ENCODE measurements at regions of chrX and their contacts with region 1.

Region 1: GRCh38 chrX:30992381-30992904 is 79.4 kb downstream of the FTHL17 start:
- DNase-seq: no peak
- ATAC-seq: no peak
- H3K4me3 ChIP-seq: no peak overlapping the region
- H3K4me3 Mint-ChIP-seq: no peak overlapping the region
- H3K27ac ChIP-seq: no peak overlapping the region
- H3K27ac Mint-ChIP-seq: no peak overlapping the region
- H3K4me1 ChIP-seq: no peaks in the 10 kb centered on the region
- H3K4me1 Mint-ChIP-seq: no peaks in the 10 kb centered on the region
- H3K27me3 ChIP-seq: no peaks in the 10 kb centered on the region
- H3K27me3 Mint-ChIP-seq: no peaks in the 10 kb centered on the region
- CTCF ChIP-seq: no peak

Region 2: DNA sequence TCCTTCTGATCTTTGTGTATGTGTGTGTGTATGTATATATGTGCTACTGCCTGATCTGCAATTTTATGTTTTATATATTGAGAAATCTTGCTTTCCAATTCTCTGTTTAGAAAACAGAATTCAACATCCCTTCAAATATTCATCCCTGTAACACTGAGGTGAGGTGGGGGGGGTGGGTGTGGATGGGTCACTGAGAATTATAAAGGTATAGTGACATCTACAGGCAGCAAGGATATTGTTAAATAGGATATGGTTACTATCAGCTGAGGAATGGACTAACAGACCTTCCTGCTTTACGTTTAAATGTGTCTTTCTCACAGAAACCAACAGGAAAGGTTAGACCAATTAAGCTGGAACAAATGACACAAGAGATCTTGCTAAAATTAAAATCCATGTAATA is 796.1 kb before region 1 on chrX:
- CTCF ChIA-PET with region 1: no interaction called
- POLR2A ChIA-PET with region 1: no interaction called
- intact Hi-C with region 1: no loop called
- DNase-seq: no peak
- ATAC-seq: no peak
- H3K4me3 ChIP-seq: no peak overlapping the region
- H3K4me3 Mint-ChIP-seq: no peak overlapping the region
- H3K27ac ChIP-seq: no peak overlapping the region
- H3K27ac Mint-ChIP-seq: no peak overlapping the region
- H3K4me1 ChIP-seq: no peaks in the 10 kb centered on the region
- H3K4me1 Mint-ChIP-seq: no peaks in the 10 kb centered on the region
- H3K27me3 ChIP-seq: no peaks in the 10 kb centered on the region
- H3K27me3 Mint-ChIP-seq: no peaks in the 10 kb centered on the region
- CTCF ChIP-seq: no peak

Region 3: GRCh38 chrX:31036895-31037294 is 44.5 kb after region 1 on chrX:
- CTCF ChIA-PET with region 1: no interaction called
- POLR2A ChIA-PET with region 1: no interaction called
- intact Hi-C with region 1: loop called in 1 of 2 experiments (anchors 5 kb)
- DNase-seq: peak in 1 of 9 experiments; percentile 0
- ATAC-seq: no peak
- H3K4me3 ChIP-seq: no peak overlapping the region
- H3K4me3 Mint-ChIP-seq: no peak overlapping the region
- H3K27ac ChIP-seq: no peak overlapping the region
- H3K27ac Mint-ChIP-seq: no peak overlapping the region
- H3K4me1 ChIP-seq: no peaks in the 10 kb centered on the region
- H3K4me1 Mint-ChIP-seq: no peaks in the 10 kb centered on the region
- H3K27me3 ChIP-seq: no peaks in the 10 kb centered on the region
- H3K27me3 Mint-ChIP-seq: no peaks in the 10 kb centered on the region
- CTCF ChIP-seq: no peak

Region 4: DNA sequence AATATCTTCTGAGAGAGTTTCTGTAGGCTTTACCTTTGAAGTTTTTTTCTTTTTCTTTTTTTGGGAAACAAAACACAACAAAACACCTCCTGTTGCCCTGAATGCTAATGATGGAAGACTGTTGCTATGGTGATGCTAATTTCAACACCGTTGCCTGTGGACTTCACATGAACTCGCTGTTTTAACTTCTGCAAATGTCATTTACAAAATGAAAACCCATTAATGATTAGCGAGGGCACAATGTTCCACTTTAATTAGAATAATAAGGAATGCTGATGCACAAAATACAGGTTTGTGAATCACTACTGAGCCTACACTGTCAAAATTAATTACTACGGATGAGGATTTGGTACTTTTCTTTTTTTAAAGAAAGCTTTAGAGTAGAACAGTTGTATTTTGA is 306.5 kb after region 1 on chrX:
- CTCF ChIA-PET with region 1: no interaction called
- POLR2A ChIA-PET with region 1: no interaction called
- intact Hi-C with region 1: no loop called
- DNase-seq: no peak
- ATAC-seq: no peak
- H3K4me3 ChIP-seq: no peak overlapping the region
- H3K4me3 Mint-ChIP-seq: no peak overlapping the region
- H3K27ac ChIP-seq: no peak overlapping the region
- H3K27ac Mint-ChIP-seq: no peak overlapping the region
- H3K4me1 ChIP-seq: no peaks in the 10 kb centered on the region
- H3K4me1 Mint-ChIP-seq: no peaks in the 10 kb centered on the region
- H3K27me3 ChIP-seq: no peaks in the 10 kb centered on the region
- H3K27me3 Mint-ChIP-seq: no peaks in the 10 kb centered on the region
- CTCF ChIP-seq: no peak